MCF 10A (cell line): ENCODE measurements at regions of chr6 and their contacts with region 1.

Region 1: DNA sequence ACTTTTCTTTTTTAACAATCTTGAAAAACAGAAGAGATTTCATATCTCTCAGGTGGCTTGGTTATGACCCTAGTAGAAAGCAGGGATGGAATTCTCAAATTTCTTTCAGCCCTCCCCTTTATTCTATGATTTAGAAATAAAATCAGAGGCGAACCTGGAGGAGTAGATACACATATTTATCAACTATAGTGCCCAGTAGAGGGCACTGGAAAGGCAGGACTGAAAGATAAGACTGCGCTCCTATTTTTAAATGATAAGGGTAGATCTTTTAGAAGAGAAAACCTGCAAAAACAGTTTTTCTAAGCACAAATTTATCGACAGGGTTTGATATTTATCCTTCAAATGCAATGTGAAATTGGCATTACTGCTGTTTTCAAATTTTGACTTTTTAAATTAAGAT is 1296.6 kb downstream of the EPHA7 start:
- DNase-seq: peak; percentile 43
- H3K4me3 Mint-ChIP-seq: no peak overlapping the region
- H3K27ac Mint-ChIP-seq: no peak overlapping the region
- H3K4me1 Mint-ChIP-seq: peaks cover 27% of the 10 kb centered on the region
- H3K27me3 Mint-ChIP-seq: no peaks in the 10 kb centered on the region
- CTCF ChIP-seq: peak; percentile 32

Region 2: DNA sequence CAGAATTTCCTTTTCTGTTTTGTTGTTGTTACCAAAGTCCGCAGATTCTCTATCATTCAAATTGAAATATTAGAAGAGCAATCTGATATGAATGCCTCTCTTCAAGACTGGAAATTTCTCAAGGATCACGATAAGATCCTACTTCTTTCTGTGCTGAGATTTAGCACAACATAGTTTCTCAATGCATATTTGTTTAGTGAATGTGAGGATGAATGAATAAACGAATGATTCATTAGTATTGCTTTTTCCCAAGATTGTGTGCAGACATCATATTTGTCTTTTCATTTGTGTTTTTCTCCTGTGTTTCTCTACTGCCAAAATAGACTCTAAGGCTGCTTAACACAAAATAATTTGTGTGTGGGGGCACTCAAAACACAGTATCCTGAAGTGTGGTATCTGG is 673.2 kb before region 1 on chr6:
- CTCF ChIA-PET with region 1: no interaction called
- POLR2A ChIA-PET with region 1: no interaction called
- intact Hi-C with region 1: no loop called
- DNase-seq: no peak
- H3K4me3 Mint-ChIP-seq: no peak overlapping the region
- H3K27ac Mint-ChIP-seq: no peak overlapping the region
- H3K4me1 Mint-ChIP-seq: no peaks in the 10 kb centered on the region
- H3K27me3 Mint-ChIP-seq: peaks cover 16% of the 10 kb centered on the region
- CTCF ChIP-seq: no peak

Region 3: GRCh38 chr6:91786466-91787184 is 336.1 kb before region 1 on chr6:
- CTCF ChIA-PET with region 1: no interaction called
- POLR2A ChIA-PET with region 1: no interaction called
- intact Hi-C with region 1: no loop called
- DNase-seq: no peak
- H3K4me3 Mint-ChIP-seq: no peak overlapping the region
- H3K27ac Mint-ChIP-seq: no peak overlapping the region
- H3K4me1 Mint-ChIP-seq: no peaks in the 10 kb centered on the region
- H3K27me3 Mint-ChIP-seq: no peaks in the 10 kb centered on the region
- CTCF ChIP-seq: no peak

Region 4: GRCh38 chr6:92159046-92159445 is 36.3 kb after region 1 on chr6:
- CTCF ChIA-PET with region 1: no interaction called
- POLR2A ChIA-PET with region 1: no interaction called
- intact Hi-C with region 1: no loop called
- DNase-seq: no peak
- H3K4me3 Mint-ChIP-seq: no peak overlapping the region
- H3K27ac Mint-ChIP-seq: no peak overlapping the region
- H3K4me1 Mint-ChIP-seq: no peaks in the 10 kb centered on the region
- H3K27me3 Mint-ChIP-seq: no peaks in the 10 kb centered on the region
- CTCF ChIP-seq: no peak

Region 5: GRCh38 chr6:92289831-92290230 is 167.1 kb after region 1 on chr6:
- CTCF ChIA-PET with region 1: no interaction called
- POLR2A ChIA-PET with region 1: no interaction called
- intact Hi-C with region 1: loop called (anchors 10 kb)
- DNase-seq: no peak
- H3K4me3 Mint-ChIP-seq: no peak overlapping the region
- H3K27ac Mint-ChIP-seq: no peak overlapping the region
- H3K4me1 Mint-ChIP-seq: no peaks in the 10 kb centered on the region
- H3K27me3 Mint-ChIP-seq: peaks cover 14% of the 10 kb centered on the region
- CTCF ChIP-seq: no peak

Region 6: DNA sequence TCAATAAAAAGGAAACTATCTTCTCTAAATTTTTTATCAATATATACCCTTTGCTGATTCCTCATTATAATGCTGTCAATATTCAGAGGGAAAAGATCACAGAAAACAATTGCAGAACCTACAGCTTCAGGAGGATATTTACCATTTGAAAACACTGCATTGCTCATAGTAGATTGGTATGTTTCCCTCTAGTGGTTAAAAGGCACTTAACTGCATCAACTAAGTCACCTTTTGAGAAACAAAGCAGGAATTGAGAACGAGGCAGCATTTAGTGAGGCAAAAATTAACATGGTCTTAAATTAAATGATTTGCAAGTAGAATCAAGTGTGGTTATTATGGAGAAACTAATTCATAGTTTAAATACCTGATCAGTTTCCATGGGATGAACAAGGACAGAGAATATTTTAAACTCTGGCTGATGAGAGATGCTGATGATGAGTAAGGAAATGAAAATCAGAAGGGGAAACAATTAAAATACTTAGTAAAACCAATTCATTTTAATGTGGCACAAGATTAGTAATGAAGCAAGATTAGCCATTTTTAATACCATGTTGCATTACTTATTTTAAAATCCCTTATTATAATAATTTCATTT is 654.5 kb after region 1 on chr6:
- CTCF ChIA-PET with region 1: interaction called, 6 read pairs
- POLR2A ChIA-PET with region 1: no interaction called
- intact Hi-C with region 1: loop called (anchors 2 kb)
- DNase-seq: peak; percentile 49
- H3K4me3 Mint-ChIP-seq: no peak overlapping the region
- H3K27ac Mint-ChIP-seq: no peak overlapping the region
- H3K4me1 Mint-ChIP-seq: peaks cover 13% of the 10 kb centered on the region
- H3K27me3 Mint-ChIP-seq: peaks cover 18% of the 10 kb centered on the region
- CTCF ChIP-seq: peak; percentile 56